Activated CD4-positive, alpha-beta T cell treated with anti-CD3 and anti-CD28 coated beads, Interleukin-2, amount 10 ng/mL, durations not matched to agents 7 days and 5 days (primary cell): ENCODE measurements at regions of chr16 and their contacts with region 1.

Region 1: DNA sequence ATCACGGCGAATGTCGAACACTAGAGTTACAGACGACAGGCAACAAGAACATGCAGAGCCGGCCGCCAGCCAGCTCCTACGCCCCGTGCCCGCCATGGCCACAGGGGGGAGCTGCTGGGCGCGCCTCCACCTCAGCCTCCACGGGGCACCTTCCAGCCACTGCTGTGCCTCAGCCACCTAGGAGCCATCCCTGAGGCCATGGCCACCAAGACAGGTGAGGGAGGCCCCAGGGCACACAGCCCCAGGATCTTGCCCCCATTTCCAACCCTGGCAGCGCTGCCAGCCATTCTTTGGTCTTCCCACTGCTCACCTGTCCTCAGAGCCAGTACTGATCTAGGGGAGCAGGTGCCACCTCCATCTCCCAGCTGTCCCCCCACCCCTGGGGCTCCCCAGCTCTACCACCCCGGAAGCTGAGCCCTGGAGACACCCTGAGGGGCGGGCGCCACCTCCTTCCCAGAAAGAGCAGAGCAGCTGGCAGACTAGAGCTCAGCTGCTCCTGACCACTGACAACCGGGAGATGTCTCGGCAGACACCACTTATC is 11.8 kb downstream of the GNPTG start:
- DNase-seq: peak; percentile 72
- H3K4me3 Mint-ChIP-seq: no peak overlapping the region
- H3K27ac Mint-ChIP-seq: no peak overlapping the region
- H3K4me1 Mint-ChIP-seq: peaks cover 2% of the 10 kb centered on the region
- H3K27me3 Mint-ChIP-seq: no peaks in the 10 kb centered on the region

Region 2: DNA sequence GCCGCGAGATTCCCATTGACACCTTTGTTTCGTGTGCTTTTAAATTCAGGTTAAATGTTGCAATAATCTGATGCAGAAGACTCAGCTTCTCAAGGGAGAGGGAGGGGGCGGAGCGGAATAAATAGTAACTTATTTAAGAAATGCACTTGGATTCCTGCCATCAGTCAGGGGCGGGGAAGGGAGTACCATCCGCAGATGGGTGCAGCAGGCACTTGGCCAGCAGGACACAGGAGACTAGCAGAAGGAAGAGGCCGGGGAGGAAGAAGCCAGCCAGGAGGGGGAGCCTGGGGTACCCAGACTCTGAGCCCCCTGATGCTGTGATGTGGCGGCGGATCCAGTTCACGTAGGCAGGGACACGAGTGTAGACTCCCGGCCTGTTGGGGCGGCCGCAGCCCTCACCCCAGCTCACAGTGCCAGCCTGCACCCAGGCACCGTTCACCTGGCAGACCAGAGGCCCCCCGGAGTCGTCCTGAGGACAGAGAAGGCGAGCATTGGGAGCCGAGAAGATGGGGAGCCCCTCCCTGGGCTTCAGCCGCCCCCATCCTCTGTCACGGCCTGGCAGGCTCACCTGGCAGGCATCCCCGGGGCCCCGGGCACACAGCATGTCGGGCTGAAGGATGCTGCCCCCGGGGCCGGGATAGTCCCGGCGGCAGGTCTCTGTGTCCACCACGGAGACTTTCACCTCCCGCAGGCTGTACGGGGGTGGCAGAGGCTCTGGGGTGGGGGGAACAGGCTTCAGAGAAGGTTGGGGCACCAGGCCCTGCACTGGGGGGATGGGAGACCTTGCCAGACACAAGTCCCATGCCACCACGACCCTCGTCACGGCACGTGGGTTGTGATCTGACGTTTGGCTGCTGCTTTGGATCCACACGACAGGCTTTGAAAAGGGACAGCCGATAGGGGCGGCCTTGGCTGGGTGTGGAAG is 141.7 kb before region 1 on chr16:
- CTCF ChIA-PET with region 1: no interaction called
- POLR2A ChIA-PET with region 1: no interaction called
- DNase-seq: no peak
- H3K4me3 Mint-ChIP-seq: no peak overlapping the region
- H3K27ac Mint-ChIP-seq: no peak overlapping the region
- H3K4me1 Mint-ChIP-seq: no peaks in the 10 kb centered on the region
- H3K27me3 Mint-ChIP-seq: no peaks in the 10 kb centered on the region

Region 3: GRCh38 chr16:1378804-1379303 is 15.3 kb after region 1 on chr16:
- CTCF ChIA-PET with region 1: interaction called, 18 read pairs
- POLR2A ChIA-PET with region 1: no interaction called
- DNase-seq: peak; percentile 44
- H3K4me3 Mint-ChIP-seq: peak overlapping the region; percentile 70
- H3K27ac Mint-ChIP-seq: peak overlapping the region; percentile 73
- H3K4me1 Mint-ChIP-seq: peaks cover 14% of the 10 kb centered on the region
- H3K27me3 Mint-ChIP-seq: no peaks in the 10 kb centered on the region